Sigmoid colon (tissue), 7 donors: ENCODE measurements at regions of chr1 and their contacts with region 1.

Region 1: GRCh38 chr1:206716870-206717673 is 32.4 kb downstream of the MAPKAPK2 start:
- DNase-seq: peak; percentile 69
- H3K4me3 ChIP-seq: no peak overlapping the region
- H3K27ac ChIP-seq: peak overlapping the region in 2 of 4 donors; percentile 85 to 88
- H3K4me1 ChIP-seq: peaks cover 0 to 88% (median 74%) of the 10 kb centered on the region in 4 donors
- H3K27me3 ChIP-seq: no peaks in the 10 kb centered on the region
- CTCF ChIP-seq: no peak
- EP300 ChIP-seq: no peak
- POLR2A ChIP-seq: no peak

Region 2: DNA sequence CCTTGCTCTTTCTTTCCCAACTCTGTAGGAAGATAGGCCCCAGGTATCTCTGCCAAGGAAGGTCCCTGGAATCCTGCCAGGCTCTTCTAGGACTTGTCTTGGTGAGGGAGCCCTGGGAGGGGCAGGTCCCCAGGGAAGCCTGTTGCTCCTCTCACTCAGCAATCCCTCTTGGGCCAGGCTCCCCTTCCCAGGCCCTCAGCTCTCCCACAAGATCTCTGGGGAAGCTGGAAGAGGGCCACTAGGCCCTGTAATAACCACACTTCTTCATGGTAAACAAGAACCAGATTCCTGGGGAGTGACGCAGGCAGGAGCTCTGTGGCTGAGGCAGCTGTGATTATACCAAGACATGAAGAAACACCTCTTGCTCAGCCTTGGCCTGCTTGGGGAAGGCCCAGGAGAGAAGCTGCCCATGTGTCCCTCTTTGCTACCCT is 42.3 kb before region 1 on chr1:
- intact Hi-C with region 1: loop called (anchors 5 kb)
- DNase-seq: peak; percentile 97
- H3K4me3 ChIP-seq: no peak overlapping the region
- H3K27ac ChIP-seq: peak overlapping the region; percentile 77 to 92 (median 83)
- H3K4me1 ChIP-seq: peaks cover 0 to 46% (median 27%) of the 10 kb centered on the region in 4 donors
- H3K27me3 ChIP-seq: no peaks in the 10 kb centered on the region
- CTCF ChIP-seq: no peak
- EP300 ChIP-seq: peak in 2 of 4 donors; percentile 54 to 80
- POLR2A ChIP-seq: no peak

Region 3: DNA sequence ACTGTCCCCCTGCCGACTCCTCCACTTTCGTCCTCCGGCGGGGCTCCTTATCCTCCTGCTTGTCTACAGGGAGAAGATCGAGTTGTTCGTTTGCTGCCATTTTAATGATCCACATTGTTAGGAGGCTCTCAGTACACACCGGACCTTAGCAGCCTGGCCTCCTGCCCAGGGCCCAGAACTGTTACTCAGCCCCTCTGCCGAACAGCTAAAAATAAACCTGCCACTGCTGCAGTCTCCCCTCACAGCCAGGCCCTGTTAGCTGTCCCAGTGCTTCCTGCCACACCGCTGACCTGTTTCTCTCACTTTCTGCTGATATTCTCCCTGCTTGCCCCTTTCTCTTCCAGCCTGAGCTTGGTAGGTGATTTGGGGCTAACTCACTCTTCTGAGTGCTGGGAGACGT is 24.0 kb before region 1 on chr1:
- intact Hi-C with region 1: loop called (anchors 2 kb)
- DNase-seq: peak; percentile 95
- H3K4me3 ChIP-seq: peak overlapping the region in 2 of 4 donors; percentile 20 to 24
- H3K27ac ChIP-seq: peak overlapping the region; percentile 83 to 94 (median 85)
- H3K4me1 ChIP-seq: peaks cover 0 to 100% (median 96%) of the 10 kb centered on the region in 4 donors
- H3K27me3 ChIP-seq: no peaks in the 10 kb centered on the region
- CTCF ChIP-seq: no peak
- EP300 ChIP-seq: no peak
- POLR2A ChIP-seq: no peak

Region 4: DNA sequence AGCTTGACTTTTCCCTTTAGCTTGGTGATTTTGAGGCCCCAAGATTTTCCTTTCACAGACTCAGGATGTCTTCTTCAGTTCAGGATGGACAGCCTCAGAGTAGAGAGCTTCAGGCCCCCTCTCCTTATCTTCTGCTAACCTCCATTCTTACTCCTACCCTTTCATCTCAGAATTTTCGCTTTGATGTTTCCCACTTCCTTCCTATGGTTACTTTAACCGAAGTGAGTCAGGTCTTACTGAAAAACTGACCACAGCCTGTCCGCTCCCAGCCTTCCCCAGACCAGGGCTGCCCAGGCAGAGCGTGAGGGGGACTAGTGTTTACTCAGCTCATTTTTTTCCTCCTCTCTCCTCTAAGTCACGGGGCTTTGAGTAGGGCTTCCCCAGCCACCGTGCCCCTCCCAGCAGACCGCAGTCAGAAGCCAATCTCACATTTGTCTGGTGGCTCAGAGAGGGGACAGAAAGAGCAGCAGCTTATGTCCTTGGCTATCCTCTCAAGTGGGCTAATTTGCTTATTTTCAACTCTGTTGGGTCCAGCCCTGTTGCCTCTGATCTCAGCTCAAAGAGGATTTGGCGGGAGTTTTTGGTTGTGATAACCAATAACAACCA is 49.3 kb after region 1 on chr1:
- intact Hi-C with region 1: no loop called
- DNase-seq: peak; percentile 77
- H3K4me3 ChIP-seq: no peak overlapping the region
- H3K27ac ChIP-seq: no peak overlapping the region
- H3K4me1 ChIP-seq: no peaks in the 10 kb centered on the region
- H3K27me3 ChIP-seq: no peaks in the 10 kb centered on the region
- CTCF ChIP-seq: no peak
- EP300 ChIP-seq: no peak
- POLR2A ChIP-seq: no peak

Region 5: DNA sequence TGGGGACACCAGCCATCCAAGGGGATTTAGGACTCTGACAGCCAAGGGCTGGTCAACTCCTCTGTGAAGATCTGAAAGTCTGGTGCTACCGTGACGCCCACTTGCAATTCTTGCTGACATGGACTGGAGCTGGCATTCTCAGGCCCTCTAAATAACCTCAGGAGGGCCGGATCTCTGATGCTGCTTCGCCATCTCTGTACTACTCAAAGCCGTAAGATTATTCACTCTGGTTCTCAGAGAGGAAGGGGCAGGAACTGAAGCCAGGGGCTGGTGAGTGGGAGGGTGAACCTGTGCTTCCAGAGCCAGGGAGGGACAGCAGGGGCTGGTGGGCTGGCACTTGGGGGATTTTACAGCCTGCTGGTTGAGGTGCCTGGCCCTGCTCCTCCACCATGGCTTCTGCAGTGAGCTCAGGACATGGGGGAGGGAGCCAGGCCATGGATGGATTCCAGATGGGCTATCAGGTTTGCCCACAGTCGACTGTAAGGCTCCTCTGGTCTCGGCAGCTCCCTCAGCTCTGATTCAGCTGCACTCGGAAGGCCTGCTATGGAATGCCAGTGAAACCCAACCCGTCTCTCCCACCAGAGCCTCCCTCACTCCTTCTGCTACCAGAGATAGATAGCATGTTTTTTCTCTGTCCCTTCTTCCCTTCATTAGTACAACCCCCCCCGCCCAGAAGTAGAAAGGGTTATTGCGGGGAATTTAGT is 1442.6 kb after region 1 on chr1:
- intact Hi-C with region 1: no loop called
- DNase-seq: peak; percentile 75
- H3K4me3 ChIP-seq: no peak overlapping the region
- H3K27ac ChIP-seq: peak overlapping the region; percentile 76 to 82 (median 80)
- H3K4me1 ChIP-seq: peaks cover 0 to 92% (median 72%) of the 10 kb centered on the region in 4 donors
- H3K27me3 ChIP-seq: no peaks in the 10 kb centered on the region
- CTCF ChIP-seq: no peak
- EP300 ChIP-seq: no peak
- POLR2A ChIP-seq: no peak